ENCODE measurements at regions of chr11 and their contacts with region 1.

Region 1: DNA sequence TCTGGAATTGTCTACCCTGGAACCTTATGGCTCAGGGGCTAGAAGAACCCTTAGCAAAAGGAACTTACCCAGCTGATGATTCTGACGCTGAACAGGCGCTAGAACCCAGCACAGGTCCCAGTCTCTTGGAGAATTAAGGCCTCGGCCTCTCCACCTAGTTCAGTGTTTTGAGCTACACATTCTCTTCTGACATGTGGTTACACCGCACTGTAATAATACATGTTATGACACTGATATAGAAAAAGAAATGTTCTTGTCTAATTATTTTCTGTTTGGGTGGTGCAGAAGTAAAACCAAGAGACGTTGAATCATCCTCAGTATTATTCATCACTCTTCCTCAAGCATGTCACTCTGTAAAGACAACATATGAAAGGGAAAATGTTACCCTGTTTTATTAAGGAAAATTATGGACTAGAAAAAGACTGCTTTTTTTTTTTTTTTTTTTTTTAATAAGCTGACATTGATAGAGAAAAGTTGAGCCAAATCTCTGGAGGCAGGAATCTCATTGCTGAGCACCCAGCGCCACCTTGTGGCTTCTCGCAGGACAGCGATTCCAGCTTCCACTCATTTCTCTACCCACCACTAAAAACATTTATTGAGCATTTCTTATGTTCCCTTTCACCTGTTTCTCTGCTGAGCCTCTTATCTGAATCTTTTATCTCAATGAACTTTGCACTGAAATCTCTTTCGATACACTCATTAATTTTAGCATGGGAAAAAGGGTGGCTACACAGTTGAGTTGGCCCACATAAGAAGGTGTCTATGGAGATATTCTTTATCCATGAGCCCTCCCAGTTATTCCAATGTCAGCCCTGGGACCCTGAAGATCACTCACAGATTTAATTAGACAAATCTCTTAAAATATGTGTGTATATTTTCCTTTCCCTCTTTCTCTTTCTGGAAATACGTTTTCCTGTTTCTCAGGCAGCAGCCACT is 12.6 kb upstream of the APLNR start:
- DNase-seq: peak; percentile 39
- H3K4me3 ChIP-seq: no peak overlapping the region
- H3K27ac ChIP-seq: no peak overlapping the region
- H3K27me3 ChIP-seq: no peaks in the 10 kb centered on the region
- CTCF ChIP-seq: peak; percentile 96

Region 2: DNA sequence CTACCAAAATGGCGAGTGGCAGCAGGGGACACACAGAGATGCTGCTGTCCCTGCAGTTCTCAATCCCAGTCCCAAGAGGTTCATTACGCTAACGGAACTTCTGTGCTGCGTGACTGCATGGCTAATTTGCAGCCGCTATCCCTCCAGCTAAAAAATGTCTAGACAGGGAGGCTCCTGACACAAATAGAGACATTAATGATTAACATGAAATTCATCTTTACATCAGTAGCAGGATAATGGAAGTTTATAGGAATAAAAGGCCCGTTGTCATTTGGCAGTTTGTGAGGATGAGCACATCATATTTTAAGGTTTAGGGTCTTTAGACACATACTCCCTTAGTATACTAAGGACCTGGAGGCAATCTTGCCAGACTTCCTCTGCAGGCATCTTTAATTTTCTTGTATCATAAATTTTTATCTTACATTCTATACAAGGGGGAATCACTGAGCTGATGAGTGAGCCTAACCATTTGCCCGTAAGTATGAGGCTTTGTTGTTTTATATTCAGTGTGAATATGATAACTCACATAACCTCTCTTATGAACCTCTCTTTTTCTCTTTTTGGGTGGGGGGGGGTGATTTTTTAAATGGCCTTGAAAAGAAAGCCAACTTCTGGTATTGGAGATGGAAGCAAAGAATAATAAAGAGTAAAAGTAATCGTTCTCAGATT is 401.4 kb before region 1 on chr11:
- CTCF ChIA-PET with region 1: interaction called, 236 read pairs
- POLR2A ChIA-PET with region 1: no interaction called
- DNase-seq: no peak
- H3K4me3 ChIP-seq: no peak overlapping the region
- H3K27ac ChIP-seq: no peak overlapping the region
- H3K27me3 ChIP-seq: no peaks in the 10 kb centered on the region
- CTCF ChIP-seq: no peak

Region 3: DNA sequence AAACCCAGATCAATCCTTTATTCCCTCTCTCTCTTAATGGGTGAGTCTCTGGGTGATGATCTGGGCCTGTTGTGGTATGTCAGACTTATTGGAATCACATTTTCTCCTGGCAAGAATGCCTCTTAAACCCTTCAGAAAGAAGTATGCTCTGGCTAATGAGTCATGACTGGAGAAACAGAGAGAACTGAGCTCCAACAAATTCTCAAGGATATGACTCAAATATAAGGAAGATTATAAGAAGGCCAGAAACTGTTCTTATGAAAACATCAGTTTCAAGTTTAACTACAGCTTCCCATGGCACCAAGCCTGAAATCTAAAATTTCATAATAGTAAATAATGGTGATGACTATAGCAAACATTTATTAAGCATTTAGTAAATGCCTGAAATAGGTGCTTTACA is 177.0 kb before region 1 on chr11:
- CTCF ChIA-PET with region 1: interaction called, 40 read pairs
- POLR2A ChIA-PET with region 1: no interaction called
- DNase-seq: peak; percentile 88
- H3K4me3 ChIP-seq: no peak overlapping the region
- H3K27ac ChIP-seq: no peak overlapping the region
- H3K27me3 ChIP-seq: no peaks in the 10 kb centered on the region
- CTCF ChIP-seq: no peak

Region 4: DNA sequence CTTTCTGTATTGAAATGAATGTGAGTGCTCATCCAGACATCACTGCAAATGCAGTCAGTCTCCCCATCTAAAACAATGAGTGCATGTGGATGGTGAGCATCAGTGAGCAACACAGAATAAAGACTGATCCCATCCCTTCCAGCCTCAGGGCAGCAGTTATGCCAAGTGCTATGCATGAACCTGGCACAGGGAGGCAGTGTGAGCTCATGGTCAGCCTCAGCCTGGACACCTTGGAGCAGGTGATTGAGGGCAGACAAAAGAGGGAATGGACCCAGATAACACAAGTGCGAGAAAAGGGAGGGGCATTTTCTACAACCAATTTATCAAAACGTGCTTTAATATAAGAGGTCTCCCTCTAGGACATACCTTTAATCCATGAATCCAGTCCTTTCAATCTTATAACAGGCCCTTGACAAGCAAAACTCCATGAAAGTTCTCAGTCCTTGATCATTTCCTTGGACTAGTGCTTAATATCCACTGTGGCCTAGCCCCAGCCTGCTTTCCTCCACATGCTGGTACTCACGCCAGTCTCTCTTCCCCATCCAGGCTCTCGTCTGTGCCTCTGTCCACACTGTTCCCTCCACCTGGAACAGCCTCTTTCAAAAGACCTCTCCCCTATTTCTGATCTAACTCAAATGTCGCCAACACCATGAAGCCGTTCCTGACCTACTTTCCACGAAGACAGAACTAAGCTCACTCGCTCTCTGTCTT is 118.4 kb before region 1 on chr11:
- CTCF ChIA-PET with region 1: interaction called, 331 read pairs
- POLR2A ChIA-PET with region 1: no interaction called
- DNase-seq: no peak
- H3K4me3 ChIP-seq: no peak overlapping the region
- H3K27ac ChIP-seq: no peak overlapping the region
- H3K27me3 ChIP-seq: no peaks in the 10 kb centered on the region
- CTCF ChIP-seq: peak; percentile 77

Region 5: GRCh38 chr11:57219021-57219627 is 30.5 kb before region 1 on chr11:
- CTCF ChIA-PET with region 1: interaction called, 76 read pairs
- POLR2A ChIA-PET with region 1: no interaction called
- DNase-seq: no peak
- H3K4me3 ChIP-seq: no peak overlapping the region
- H3K27ac ChIP-seq: peak overlapping the region; percentile 11
- H3K27me3 ChIP-seq: peaks cover 3% of the 10 kb centered on the region
- CTCF ChIP-seq: no peak

Region 6: DNA sequence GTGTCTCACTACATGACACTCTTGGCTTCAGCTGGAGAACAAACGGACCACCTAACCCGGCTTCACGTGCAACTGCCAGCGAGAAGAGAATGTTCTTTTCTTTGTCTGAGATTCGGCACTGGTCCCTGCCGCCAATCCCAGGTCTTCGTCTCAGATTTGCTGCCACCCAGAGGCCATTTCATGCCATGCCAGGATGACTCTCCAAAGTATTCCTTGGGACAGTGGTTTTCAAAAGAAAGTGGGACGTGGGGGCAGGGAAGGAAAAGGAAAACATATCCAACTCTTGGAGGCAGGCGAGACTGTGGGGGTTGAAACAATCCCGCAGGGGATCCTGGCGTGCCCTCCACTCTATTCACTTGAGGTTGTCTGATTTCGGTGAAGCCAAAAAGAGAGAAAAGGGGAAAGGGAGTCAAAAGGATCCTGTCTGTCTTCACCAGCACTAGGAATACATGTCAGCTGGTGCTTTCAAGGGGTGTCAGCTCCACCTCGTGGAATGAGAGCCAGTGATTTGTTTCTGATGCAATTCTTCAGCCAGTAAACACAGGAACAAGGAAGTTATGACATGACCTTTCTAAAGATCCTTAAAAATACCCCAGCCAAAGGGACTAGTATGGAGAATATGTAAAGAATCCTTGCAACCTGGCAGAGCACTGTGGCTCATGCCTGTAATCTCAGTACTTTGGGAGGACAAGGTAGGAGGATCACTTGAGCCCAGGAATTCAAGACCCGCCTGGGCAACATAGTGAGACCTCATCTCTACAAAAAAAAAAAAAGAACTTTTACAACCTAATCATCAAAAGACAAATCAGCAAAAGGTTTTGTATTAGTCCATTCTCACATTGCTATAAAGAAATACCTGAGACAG is 28.4 kb after region 1 on chr11:
- CTCF ChIA-PET with region 1: interaction called, 117 read pairs
- POLR2A ChIA-PET with region 1: no interaction called
- DNase-seq: peak; percentile 58
- H3K4me3 ChIP-seq: peak overlapping the region; percentile 25; the same call in 1 of the 2 replicates
- H3K27ac ChIP-seq: peak overlapping the region; percentile 95
- H3K27me3 ChIP-seq: no peaks in the 10 kb centered on the region
- CTCF ChIP-seq: peak; percentile 84

Measured in AG04450 (cell line).